Breast epithelium (tissue), 4 donors: ENCODE measurements at regions of chr12 and their contacts with region 1.

Region 1: DNA sequence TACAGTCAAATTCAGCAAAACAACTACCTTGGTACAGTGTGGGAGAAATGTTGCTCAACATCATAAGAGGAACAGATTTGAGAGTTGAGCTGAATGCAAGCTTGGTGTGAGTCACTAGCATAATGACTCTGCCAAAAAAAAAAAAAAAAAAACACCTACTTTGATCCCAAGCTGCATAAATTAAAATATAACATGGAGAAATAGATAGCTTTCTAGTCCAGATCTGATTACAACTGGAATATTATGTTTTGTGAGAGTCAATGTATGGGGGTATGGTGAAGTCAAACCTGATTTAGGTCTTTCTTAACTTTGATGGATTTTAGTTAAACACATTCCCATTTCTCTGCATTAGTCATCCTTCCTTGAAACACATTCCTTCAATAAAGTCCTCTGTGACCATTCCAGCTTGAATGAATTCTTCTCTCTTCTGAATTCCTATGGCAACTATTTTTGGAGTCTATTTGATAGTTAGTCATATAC is 188.1 kb downstream of the SLC5A8 start:
- DNase-seq: no peak
- H3K4me3 ChIP-seq: no peak overlapping the region
- H3K27ac ChIP-seq: peak overlapping the region in 1 of 2 donors; percentile 48
- H3K4me1 ChIP-seq: no peaks in the 10 kb centered on the region
- H3K27me3 ChIP-seq: no peaks in the 10 kb centered on the region
- CTCF ChIP-seq: no peak
- POLR2A ChIP-seq: no peak

Region 2: DNA sequence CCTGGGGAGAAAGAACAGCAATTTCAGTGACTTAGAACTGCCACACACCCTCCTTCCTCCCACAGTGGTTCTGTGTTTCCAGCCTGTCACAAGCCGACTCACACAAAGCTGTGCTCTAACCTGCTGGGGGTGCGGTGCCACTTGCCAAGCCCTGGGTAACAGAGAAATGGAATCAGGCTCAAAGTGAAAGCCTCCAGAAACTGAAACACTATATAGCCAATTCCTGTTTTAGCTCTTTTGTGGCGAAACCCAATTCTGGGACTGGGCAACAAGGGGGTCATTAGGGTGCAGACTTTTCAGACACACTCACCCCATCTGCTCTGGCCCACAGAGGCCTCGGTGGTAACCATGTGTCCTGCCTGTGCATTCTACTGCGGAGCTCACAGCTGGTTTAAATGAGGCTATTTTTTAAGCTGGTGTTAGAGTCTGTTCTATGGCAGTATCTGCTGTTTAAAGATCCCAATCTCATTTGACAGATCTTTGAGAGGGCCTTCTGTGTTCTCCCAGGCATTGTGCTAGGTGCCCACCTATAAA is 836.5 kb before region 1 on chr12:
- intact Hi-C with region 1: loop called (anchors 10 kb)
- DNase-seq: no peak
- H3K4me3 ChIP-seq: peak overlapping the region in 2 of 3 donors; percentile 20 to 40
- H3K27ac ChIP-seq: peak overlapping the region; percentile 38 to 67
- H3K4me1 ChIP-seq: no peaks in the 10 kb centered on the region
- H3K27me3 ChIP-seq: no peaks in the 10 kb centered on the region
- CTCF ChIP-seq: no peak
- POLR2A ChIP-seq: no peak